Breast epithelium (tissue), 4 donors: ENCODE measurements at regions of chr17 and their contacts with region 1.

Region 1: DNA sequence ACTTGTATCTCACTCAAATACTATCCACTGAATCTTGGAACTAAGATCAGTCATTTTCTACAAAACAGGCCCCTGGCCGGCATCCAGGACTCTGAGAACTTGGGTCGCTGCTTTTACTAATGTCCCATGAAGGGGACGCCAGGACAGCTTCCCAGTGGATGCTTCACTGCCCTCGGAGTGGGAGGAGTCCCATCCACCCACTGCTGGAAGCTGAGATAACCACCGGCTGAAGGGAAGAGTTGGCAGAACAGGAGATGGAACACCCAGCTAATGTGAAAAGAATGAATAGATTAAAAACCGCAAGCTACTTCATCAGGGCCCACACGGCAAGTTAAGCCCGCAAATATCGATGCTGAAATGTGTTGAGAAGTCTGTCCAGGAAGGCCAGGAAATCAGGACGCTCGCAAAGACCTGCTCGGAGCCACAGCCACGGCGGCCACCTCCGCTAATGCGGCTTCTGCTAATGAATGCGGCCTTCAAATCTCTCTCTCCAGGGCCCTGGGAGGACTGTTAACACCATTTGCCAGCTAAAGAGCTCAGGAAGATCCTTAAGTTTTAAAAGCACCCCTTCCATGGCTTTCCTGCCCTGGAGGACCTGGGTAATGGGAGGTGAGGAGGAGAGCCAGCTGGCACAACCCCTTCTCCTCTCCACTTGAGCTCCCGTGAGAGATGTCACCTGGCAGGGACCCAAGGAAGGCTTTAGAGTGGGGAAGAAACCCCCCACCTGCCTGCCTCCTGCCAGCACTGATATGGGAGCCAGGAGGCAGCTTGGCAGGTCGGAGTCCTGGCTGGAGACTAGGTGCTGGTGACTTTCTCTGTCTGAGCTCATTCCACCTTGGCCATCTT is 226.6 kb upstream of the RPL38 start:
- DNase-seq: no peak
- H3K4me3 ChIP-seq: no peak overlapping the region
- H3K27ac ChIP-seq: no peak overlapping the region
- H3K4me1 ChIP-seq: no peaks in the 10 kb centered on the region
- H3K27me3 ChIP-seq: peaks cover 0 to 19% of the 10 kb centered on the region in 2 donors
- CTCF ChIP-seq: no peak
- POLR2A ChIP-seq: no peak

Region 2: GRCh38 chr17:73855720-73856333 is 121.1 kb before region 1 on chr17:
- intact Hi-C with region 1: no loop called
- DNase-seq: no peak
- H3K4me3 ChIP-seq: no peak overlapping the region
- H3K27ac ChIP-seq: no peak overlapping the region
- H3K4me1 ChIP-seq: no peaks in the 10 kb centered on the region
- H3K27me3 ChIP-seq: peaks cover 0 to 20% of the 10 kb centered on the region in 2 donors
- CTCF ChIP-seq: no peak
- POLR2A ChIP-seq: no peak

Region 3: GRCh38 chr17:74011966-74012365 is 35.1 kb after region 1 on chr17:
- intact Hi-C with region 1: loop called (anchors 1 kb)
- DNase-seq: no peak
- H3K4me3 ChIP-seq: no peak overlapping the region
- H3K27ac ChIP-seq: no peak overlapping the region
- H3K4me1 ChIP-seq: no peaks in the 10 kb centered on the region
- H3K27me3 ChIP-seq: peaks cover 0 to 16% of the 10 kb centered on the region in 2 donors
- CTCF ChIP-seq: no peak
- POLR2A ChIP-seq: no peak